ENCODE measurements at regions of chr22 and their contacts with region 1.

Region 1: DNA sequence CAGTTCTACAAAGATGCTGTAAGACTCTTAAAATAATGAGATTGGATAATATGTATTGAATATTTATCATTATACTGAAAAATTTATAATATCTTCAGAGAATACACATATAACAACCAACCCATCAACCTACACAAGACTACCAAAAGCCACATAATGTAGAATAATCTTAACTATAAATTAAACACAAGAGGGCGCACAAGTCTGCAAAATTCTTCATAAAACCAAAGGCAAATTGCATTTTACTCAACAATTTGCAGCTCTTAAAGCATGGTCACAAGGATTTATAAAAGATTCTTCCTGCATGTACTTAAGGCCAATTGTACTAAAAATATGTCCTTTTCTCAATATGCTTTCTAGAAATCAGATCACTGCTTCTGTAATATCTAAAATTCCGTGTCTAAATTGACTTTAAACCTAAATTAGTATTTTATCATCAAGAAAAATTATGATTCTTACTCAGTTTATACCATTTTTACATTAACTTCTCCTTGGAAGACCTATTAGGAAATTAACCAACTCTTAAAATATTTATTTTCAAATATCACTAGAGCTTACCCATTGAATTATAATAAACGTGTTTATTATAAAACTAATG is 79.0 kb downstream of the TTC28 start:
- ATAC-seq: peak in 7 of 8 experiments; percentile 32 to 57 (median 47)
- H3K4me3 ChIP-seq: no peak overlapping the region
- H3K27ac ChIP-seq: no peak overlapping the region
- H3K4me1 ChIP-seq: peaks cover 0 to 2% of the 10 kb centered on the region in 2 donors

Region 2: DNA sequence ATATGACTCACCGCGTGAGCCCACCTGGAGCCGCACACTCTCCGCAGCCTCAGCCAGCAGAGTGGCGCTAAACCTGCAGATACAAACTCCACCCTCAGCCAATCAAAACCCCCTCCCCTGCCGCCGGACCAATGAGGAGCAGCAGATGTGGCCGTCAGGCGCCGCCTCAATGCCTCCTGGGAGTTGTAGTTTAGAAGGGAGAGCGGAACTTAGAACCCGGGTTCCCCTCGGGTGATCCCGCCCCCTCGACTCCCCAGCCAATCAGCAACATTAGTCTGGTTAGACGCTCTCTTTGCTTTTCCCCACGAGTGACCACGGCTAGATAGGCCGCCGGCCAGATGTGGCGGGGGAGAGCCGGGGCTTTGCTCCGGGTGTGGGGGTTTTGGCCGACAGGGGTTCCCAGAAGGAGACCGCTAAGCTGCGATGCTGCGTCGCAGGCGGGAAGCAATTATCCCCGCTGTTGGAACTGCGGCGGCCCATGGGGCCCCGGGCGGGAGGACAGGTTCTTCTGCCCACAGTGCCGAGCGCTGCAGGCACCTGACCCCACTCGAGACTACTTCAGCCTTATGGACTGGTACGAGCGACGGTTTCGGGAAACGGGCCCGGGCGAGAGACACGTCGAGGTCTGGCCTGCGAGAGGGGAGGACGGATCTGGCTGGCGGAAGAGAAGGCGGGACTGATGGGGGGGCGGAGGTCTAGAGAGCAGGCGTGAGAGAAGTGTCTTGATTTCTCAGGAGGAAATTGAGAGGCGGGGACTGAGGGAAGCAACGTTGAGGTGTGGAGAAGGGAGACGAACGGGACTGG is 141.3 kb after region 1 on chr22 and contains the starts of genes CHEK2 and HSCB:
- in situ Hi-C with region 1: loop called in 1 of 9 experiments (anchors 25 kb)
- ATAC-seq: peak; percentile 87 to 96 (median 94)
- H3K4me3 ChIP-seq: peak within 1 kb of the TSS; percentile 74 to 96 (median 87)
- H3K27ac ChIP-seq: peak within 1 kb of the TSS; percentile 67 to 86
- H3K4me1 ChIP-seq: peaks cover 0 to 5% of the 10 kb centered on the region in 2 donors
- total RNA-seq, gene CHEK2: 3.0 to 19.7 (median 10.2) TPM
- total RNA-seq, gene HSCB: 7.7 to 25.8 (median 16.2) TPM

Region 3: GRCh38 chr22:28800308-28801077 is 199.8 kb after region 1 on chr22 and contains the start of gene XBP1:
- in situ Hi-C with region 1: loop called in 1 of 9 experiments (anchors 25 kb)
- ATAC-seq: peak; percentile 88 to 95 (median 92)
- H3K4me3 ChIP-seq: peak within 1 kb of the TSS; percentile 78 to 98 (median 87)
- H3K27ac ChIP-seq: peak within 1 kb of the TSS; percentile 96 to 99
- H3K4me1 ChIP-seq: peaks cover 17 to 24% of the 10 kb centered on the region in 2 donors
- total RNA-seq, gene XBP1: 48.5 to 253 (median 99.5) TPM

Region 4: GRCh38 chr22:28829358-28830181 is 228.9 kb after region 1 on chr22:
- in situ Hi-C with region 1: loop called in 3 of 9 experiments (anchors 10 to 25 kb)
- ATAC-seq: peak; percentile 48 to 93 (median 66)
- H3K4me3 ChIP-seq: no peak overlapping the region
- H3K27ac ChIP-seq: no peak overlapping the region
- H3K4me1 ChIP-seq: no peaks in the 10 kb centered on the region

Region 5: DNA sequence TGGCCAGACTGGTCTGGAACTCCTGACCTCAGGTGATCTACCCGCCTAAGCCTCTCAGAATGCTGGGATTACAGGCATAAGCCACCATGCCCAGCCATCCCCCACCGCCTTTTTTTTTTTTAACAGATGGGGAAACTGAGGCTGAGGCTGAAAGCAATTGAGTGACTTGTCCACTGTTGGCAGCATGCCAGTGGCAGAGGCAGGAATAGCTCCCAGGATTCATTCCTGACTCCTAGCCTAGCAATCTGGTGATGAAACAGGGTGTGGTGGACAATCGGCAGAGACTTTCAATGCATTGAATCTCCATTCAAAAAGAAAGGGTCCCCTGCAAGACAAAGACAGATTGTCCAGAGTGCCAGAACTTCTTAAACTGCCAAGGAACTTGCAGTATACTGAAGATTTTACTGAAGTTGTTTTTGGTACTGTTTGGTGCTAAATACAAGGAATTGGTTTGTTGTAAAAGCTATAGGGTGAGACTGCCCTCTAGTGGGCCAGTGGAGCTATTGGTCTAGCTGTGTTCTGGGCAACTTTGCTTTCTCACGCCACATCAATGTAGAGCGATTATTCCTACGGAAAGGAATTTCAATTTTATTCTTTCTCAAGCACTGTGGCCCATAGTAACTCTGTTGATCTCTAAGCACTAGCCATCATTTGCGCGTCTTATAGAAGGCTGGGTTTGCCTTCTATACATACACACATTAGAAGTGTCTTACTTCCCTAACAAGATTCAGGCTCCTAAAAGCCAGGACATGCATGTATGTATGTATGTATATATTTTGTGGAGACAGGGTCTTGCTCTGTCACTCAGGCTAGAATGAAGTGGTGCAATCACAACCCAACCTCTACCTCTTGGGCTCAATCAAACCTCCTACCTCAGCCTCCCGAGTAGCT is 440.0 kb after region 1 on chr22:
- in situ Hi-C with region 1: loop called in 4 of 9 experiments (anchors 25 kb)
- ATAC-seq: peak; percentile 79 to 92 (median 86)
- H3K4me3 ChIP-seq: no peak overlapping the region
- H3K27ac ChIP-seq: no peak overlapping the region
- H3K4me1 ChIP-seq: peaks cover 0 to 10% of the 10 kb centered on the region in 2 donors

Measured in motor neuron (in vitro differentiated cells).